Activated T-helper 1 cell treated with anti-CD3 and anti-CD28 coated beads, Interleukin-12 subunit alpha, Interleukin-12 subunit beta, Interleukin-2, Interleukin-4 antibody, amounts not matched to agents 30 ng/mL and 10 ng/mL and 1 ng/mL, durations not matched to agents 14 hours and 24 hours and 36 hours (primary cell): ENCODE measurements at regions of chr7 and their contacts with region 1.

Region 1: GRCh38 chr7:30284298-30285066 is at the start of gene ZNRF2:
- DNase-seq: peak; percentile 99
- H3K4me3 Mint-ChIP-seq: peak within 1 kb of the TSS; percentile 78
- H3K27ac Mint-ChIP-seq: peak within 1 kb of the TSS; percentile 89
- H3K4me1 Mint-ChIP-seq: peaks cover 41% of the 10 kb centered on the region
- H3K27me3 Mint-ChIP-seq: no peaks in the 10 kb centered on the region
- total RNA-seq, gene ZNRF2: 8.4 and 9.3 TPM in 2 replicates

Region 2: DNA sequence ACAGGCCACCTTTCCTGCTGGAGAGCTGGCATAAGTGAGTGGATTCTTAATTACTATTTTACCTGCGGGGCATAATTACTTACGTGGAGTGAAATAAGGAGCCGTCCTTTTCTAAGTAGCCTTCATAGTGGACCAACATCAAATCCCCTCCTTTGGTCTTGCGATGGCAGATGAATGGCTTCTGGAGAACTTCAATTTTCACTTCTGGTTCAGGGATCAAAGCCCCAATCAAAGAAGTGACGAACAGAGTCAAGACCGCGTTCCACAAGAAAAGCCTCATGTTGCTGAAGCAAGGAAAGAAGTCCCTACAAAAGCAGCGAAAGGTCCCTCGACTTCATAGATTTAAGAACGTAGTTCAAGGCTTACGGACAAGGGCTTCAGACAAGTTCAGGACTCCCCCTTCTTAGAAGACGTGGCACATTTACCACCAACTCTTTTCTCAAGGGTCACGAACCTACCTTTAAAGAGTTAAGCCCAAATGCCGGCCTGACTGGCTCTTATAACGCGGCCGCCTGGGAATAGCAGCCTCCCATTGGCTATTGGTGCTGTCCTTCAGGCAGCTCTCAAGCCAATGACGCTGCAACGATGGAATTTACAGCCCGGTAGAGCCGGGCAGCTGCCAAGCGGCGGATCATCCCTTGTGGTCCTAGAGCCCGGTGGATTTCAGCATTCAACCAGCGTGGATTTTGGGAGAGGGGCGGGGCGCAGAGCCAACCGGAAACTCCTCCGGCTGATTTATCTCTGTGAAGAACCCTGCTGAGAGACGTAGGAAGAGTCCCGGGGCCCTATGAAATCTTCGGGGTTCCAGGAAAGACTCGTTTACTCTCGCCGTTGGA is 258.0 kb before region 1 on chr7 and contains the start of gene FKBP14:
- intact Hi-C with region 1: loop called (anchors 1 kb)
- DNase-seq: peak; percentile 91
- H3K4me3 Mint-ChIP-seq: no peak within 1 kb of the TSS
- H3K27ac Mint-ChIP-seq: peak within 1 kb of the TSS; percentile 89
- H3K4me1 Mint-ChIP-seq: peaks cover 44% of the 10 kb centered on the region
- H3K27me3 Mint-ChIP-seq: no peaks in the 10 kb centered on the region
- total RNA-seq, gene FKBP14: 8.4 and 10.6 TPM in 2 replicates

Region 3: DNA sequence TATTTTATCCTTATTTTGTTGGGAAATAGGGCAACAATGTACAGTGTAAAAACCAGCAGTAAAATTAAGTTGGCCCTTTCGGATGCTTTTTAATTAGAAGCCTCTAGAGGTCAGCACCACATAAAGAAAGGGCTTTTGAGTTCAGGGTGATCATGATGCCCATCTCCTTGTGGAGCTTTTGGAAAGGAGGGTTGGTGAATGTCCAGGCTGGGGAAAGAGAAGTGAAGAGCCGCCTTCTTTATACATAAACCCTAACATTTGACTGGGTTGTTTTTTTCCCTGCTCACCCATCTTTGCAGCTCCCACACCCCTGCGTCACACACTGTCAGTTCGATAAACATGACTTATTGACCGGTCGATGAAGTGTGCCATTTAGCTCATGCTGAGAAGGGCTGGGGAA is 119.9 kb before region 1 on chr7:
- intact Hi-C with region 1: loop called (anchors 1 kb)
- DNase-seq: no peak
- H3K4me3 Mint-ChIP-seq: no peak overlapping the region
- H3K27ac Mint-ChIP-seq: no peak overlapping the region
- H3K4me1 Mint-ChIP-seq: peaks cover 45% of the 10 kb centered on the region
- H3K27me3 Mint-ChIP-seq: peaks cover 3% of the 10 kb centered on the region

Region 4: DNA sequence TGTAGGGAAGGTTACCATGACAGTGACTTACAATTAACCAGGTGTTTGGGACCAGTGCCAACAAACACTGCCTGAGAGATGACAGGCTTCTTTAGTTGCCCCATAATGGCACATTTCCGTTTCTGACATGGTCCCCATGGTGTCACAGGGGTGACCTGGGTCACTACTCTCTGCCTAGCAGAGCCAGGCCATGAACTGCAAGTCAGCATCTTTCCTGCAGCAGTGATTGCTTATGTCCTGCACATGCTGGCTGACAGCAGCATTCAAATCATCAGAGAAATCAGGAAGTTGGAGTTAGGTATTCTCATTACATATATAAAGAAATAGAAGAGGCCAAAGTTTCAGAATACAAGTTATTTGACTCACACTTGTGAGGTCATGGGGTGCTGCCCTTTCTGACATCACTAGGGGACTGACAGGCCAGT is 47.2 kb before region 1 on chr7:
- intact Hi-C with region 1: no loop called
- DNase-seq: no peak
- H3K4me3 Mint-ChIP-seq: no peak overlapping the region
- H3K27ac Mint-ChIP-seq: no peak overlapping the region
- H3K4me1 Mint-ChIP-seq: no peaks in the 10 kb centered on the region
- H3K27me3 Mint-ChIP-seq: peaks cover 4% of the 10 kb centered on the region

Region 5: GRCh38 chr7:30268586-30268985 is 15.9 kb before region 1 on chr7:
- intact Hi-C with region 1: no loop called
- DNase-seq: no peak
- H3K4me3 Mint-ChIP-seq: no peak overlapping the region
- H3K27ac Mint-ChIP-seq: no peak overlapping the region
- H3K4me1 Mint-ChIP-seq: no peaks in the 10 kb centered on the region
- H3K27me3 Mint-ChIP-seq: peaks cover 11% of the 10 kb centered on the region

Region 6: DNA sequence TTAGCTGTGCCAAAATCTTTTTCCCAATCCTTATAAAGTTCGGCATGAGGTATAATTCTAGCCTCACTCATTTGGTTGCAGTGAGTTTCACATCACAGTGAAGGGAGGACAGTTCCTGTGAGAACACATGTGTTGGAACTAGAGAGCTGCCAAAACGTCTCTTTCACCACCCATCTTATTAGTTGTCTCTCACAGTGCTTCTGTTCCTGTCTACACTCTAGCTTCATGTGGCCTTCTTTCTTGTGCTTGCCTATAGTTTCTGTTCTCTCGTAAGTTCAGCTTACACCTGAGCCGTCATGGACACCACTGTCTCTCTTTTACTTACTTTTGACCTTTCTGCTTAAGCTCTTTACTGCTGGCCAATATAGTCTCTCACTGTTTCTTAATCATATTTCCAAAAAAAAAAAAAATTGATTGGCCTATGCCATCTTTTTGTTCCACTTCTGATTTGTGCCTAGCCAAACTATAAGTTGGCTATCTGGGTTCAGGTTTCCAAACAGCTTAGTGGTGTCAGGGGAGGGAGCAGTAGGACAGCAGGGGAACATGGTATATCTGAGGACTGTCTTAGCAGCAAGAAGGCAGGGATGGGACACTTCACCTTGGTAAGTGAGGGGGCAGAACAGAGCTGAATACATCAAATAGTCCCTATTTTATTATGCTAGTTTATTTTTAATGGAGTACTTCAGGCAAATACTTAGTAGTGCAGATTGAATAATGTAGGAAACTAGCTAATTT is 38.0 kb after region 1 on chr7:
- intact Hi-C with region 1: loop called (anchors 1 kb)
- DNase-seq: peak; percentile 11
- H3K4me3 Mint-ChIP-seq: peak overlapping the region; percentile 84
- H3K27ac Mint-ChIP-seq: peak overlapping the region; percentile 94
- H3K4me1 Mint-ChIP-seq: peaks cover 59% of the 10 kb centered on the region
- H3K27me3 Mint-ChIP-seq: no peaks in the 10 kb centered on the region

Region 7: GRCh38 chr7:30348083-30348560 is 63.6 kb after region 1 on chr7:
- intact Hi-C with region 1: loop called (anchors 1 kb)
- DNase-seq: peak; percentile 53
- H3K4me3 Mint-ChIP-seq: peak overlapping the region; percentile 38
- H3K27ac Mint-ChIP-seq: peak overlapping the region; percentile 81
- H3K4me1 Mint-ChIP-seq: peaks cover 65% of the 10 kb centered on the region
- H3K27me3 Mint-ChIP-seq: peaks cover 2% of the 10 kb centered on the region

Region 8: DNA sequence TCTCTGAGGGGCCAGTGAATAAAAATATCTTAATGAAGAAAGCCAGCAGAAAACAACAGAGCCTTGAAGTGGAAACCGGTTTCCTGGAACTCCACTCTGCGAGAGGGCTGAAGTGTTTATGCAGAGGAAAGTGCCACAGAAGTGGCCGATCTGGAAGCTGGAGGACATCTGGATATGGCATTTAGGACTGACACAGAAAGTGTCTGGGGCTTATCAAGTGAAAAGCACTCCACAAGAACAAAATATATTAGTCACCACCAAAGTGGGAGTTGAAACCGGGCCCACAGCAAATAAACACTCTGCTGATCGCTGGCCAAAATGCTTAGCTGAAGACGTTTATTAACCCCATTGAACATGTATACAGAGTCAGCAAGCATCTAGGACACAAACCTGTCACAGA is 186.3 kb after region 1 on chr7:
- intact Hi-C with region 1: loop called (anchors 2 kb)
- DNase-seq: no peak
- H3K4me3 Mint-ChIP-seq: peak overlapping the region; percentile 27
- H3K27ac Mint-ChIP-seq: peak overlapping the region; percentile 38
- H3K4me1 Mint-ChIP-seq: peaks cover 82% of the 10 kb centered on the region
- H3K27me3 Mint-ChIP-seq: no peaks in the 10 kb centered on the region

Region 9: GRCh38 chr7:30504347-30505173 is 220.1 kb after region 1 on chr7 and contains the start of gene GGCT:
- intact Hi-C with region 1: loop called (anchors 1 kb)
- DNase-seq: peak; percentile 96
- H3K4me3 Mint-ChIP-seq: peak within 1 kb of the TSS; percentile 87
- H3K27ac Mint-ChIP-seq: peak within 1 kb of the TSS; percentile 89
- H3K4me1 Mint-ChIP-seq: peaks cover 53% of the 10 kb centered on the region
- H3K27me3 Mint-ChIP-seq: no peaks in the 10 kb centered on the region
- total RNA-seq, gene GGCT: 75.4 and 79.0 TPM in 2 replicates

Region 10: GRCh38 chr7:30604901-30605300 is 320.4 kb after region 1 on chr7:
- intact Hi-C with region 1: no loop called
- DNase-seq: no peak
- H3K4me3 Mint-ChIP-seq: no peak overlapping the region
- H3K27ac Mint-ChIP-seq: no peak overlapping the region
- H3K4me1 Mint-ChIP-seq: peaks cover 41% of the 10 kb centered on the region
- H3K27me3 Mint-ChIP-seq: no peaks in the 10 kb centered on the region